Caco-2 (cell line): ENCODE measurements at regions of chr19 and their contacts with region 1.

Region 1: GRCh38 chr19:8389891-8390616 is at the start of gene RAB11B:
- DNase-seq: peak; percentile 99
- H3K4me3 ChIP-seq: peak within 1 kb of the TSS; percentile 86
- H3K4me3 Mint-ChIP-seq: peak within 1 kb of the TSS; percentile 81
- H3K27ac Mint-ChIP-seq: peak within 1 kb of the TSS; percentile 95
- H3K4me1 ChIP-seq: peaks cover 18% of the 10 kb centered on the region; the same call in 1 of the 2 replicates
- H3K4me1 Mint-ChIP-seq: peaks cover 8% of the 10 kb centered on the region
- H3K27me3 ChIP-seq: no peaks in the 10 kb centered on the region
- H3K27me3 Mint-ChIP-seq: no peaks in the 10 kb centered on the region
- CTCF ChIP-seq: no peak
- total RNA-seq, gene RAB11B: 86.3 and 91.3 TPM in 2 replicates

Region 2: GRCh38 chr19:8355631-8356402 is 34.2 kb before region 1 on chr19:
- CTCF ChIA-PET with region 1: interaction called, 21 read pairs
- POLR2A ChIA-PET with region 1: no interaction called
- intact Hi-C with region 1: no loop called
- DNase-seq: no peak
- H3K4me3 ChIP-seq: no peak overlapping the region
- H3K4me3 Mint-ChIP-seq: no peak overlapping the region
- H3K27ac Mint-ChIP-seq: no peak overlapping the region
- H3K4me1 ChIP-seq: peaks cover 13% of the 10 kb centered on the region; the same call in 1 of the 2 replicates
- H3K4me1 Mint-ChIP-seq: no peaks in the 10 kb centered on the region
- H3K27me3 ChIP-seq: no peaks in the 10 kb centered on the region
- H3K27me3 Mint-ChIP-seq: no peaks in the 10 kb centered on the region
- CTCF ChIP-seq: no peak

Region 3: GRCh38 chr19:8423817-8424223 is 33.8 kb after region 1 on chr19:
- CTCF ChIA-PET with region 1: interaction called, 7 read pairs
- POLR2A ChIA-PET with region 1: interaction called, 13 read pairs
- intact Hi-C with region 1: no loop called
- DNase-seq: peak; percentile 79 to 86
- H3K4me3 ChIP-seq: no peak overlapping the region
- H3K4me3 Mint-ChIP-seq: no peak overlapping the region
- H3K27ac Mint-ChIP-seq: peak overlapping the region; percentile 45
- H3K4me1 ChIP-seq: peaks cover 11% of the 10 kb centered on the region; the same call in 1 of the 2 replicates
- H3K4me1 Mint-ChIP-seq: no peaks in the 10 kb centered on the region
- H3K27me3 ChIP-seq: no peaks in the 10 kb centered on the region
- H3K27me3 Mint-ChIP-seq: no peaks in the 10 kb centered on the region
- CTCF ChIP-seq: no peak

Region 4: DNA sequence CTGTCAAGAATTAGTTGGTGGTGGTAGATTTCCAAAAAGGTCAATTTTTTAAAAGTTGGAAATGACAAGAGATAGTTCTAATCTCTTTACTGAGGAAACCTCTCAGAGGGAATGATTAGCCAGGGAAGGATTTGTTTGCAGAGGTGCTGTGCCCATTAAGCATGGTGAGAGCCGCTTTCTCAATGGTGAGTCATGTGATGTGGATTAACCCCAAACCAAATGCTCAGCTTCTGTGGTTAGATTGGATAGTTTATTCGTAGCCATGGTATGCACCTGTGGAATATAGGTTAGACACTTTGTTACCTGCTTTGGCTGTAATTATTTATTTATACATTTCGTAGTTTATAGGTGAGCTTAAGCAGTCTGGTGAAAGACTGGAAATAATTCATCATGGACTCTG is 61.8 kb after region 1 on chr19:
- CTCF ChIA-PET with region 1: no interaction called
- POLR2A ChIA-PET with region 1: no interaction called
- intact Hi-C with region 1: no loop called
- DNase-seq: no peak
- H3K4me3 ChIP-seq: no peak overlapping the region
- H3K4me3 Mint-ChIP-seq: no peak overlapping the region
- H3K27ac Mint-ChIP-seq: no peak overlapping the region
- H3K4me1 ChIP-seq: peaks cover 13% of the 10 kb centered on the region
- H3K4me1 Mint-ChIP-seq: peaks cover 14% of the 10 kb centered on the region
- H3K27me3 ChIP-seq: no peaks in the 10 kb centered on the region
- H3K27me3 Mint-ChIP-seq: no peaks in the 10 kb centered on the region
- CTCF ChIP-seq: no peak

Region 5: DNA sequence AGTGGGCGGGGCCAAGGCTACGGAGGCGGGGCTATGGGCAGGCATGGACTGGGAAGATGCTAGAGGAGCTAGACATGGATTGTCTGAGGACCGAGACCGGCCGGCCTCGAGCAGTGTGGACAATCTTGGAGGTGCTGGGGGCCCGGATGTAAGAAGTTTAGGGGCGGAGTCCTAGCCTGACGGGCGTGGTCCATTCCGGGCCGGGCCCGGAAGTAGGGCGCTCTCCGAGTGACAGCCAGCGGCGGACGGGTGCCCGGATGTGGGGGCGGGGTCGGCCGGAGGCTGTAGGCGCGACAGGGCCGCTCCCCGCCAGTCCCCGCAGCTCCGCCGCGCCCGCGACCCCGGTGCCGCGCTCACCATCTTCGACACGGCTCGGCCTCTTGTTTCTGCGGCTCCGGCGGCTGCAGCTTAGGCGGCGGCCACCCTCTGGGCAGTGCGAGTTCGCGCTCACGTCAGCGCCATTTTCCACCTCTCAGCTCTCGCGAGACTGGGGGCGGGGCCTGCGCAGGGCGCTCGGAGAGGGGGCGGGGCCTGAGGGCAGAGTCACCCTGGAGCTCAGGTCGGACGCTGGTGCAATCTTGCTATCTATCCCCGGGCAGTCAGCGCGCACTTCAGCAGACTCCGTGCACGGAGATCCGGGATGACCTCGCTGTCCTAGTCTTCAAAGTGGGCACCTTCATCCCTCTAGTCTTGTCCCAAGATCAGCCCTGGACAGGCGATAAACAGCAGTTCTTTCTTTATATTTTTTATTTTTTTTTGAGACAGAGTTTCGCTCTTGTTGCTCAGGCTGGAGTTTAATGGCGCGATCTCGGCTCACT is 123.8 kb after region 1 on chr19 and contains the start of gene ZNF414:
- CTCF ChIA-PET with region 1: interaction called, 3 read pairs
- POLR2A ChIA-PET with region 1: interaction called, 18 read pairs
- intact Hi-C with region 1: no loop called
- DNase-seq: peak; percentile 96 to 98
- H3K4me3 ChIP-seq: peak within 1 kb of the TSS; percentile 86
- H3K4me3 Mint-ChIP-seq: peak within 1 kb of the TSS; percentile 76
- H3K27ac Mint-ChIP-seq: peak within 1 kb of the TSS; percentile 91
- H3K4me1 ChIP-seq: peaks cover 12% of the 10 kb centered on the region; the same call in 1 of the 2 replicates
- H3K4me1 Mint-ChIP-seq: no peaks in the 10 kb centered on the region
- H3K27me3 ChIP-seq: no peaks in the 10 kb centered on the region
- H3K27me3 Mint-ChIP-seq: no peaks in the 10 kb centered on the region
- CTCF ChIP-seq: no peak
- total RNA-seq, gene ZNF414: 17.2 and 25.0 TPM in 2 replicates

Region 6: GRCh38 chr19:8526345-8527067 is 136.5 kb after region 1 on chr19:
- CTCF ChIA-PET with region 1: no interaction called
- POLR2A ChIA-PET with region 1: no interaction called
- intact Hi-C with region 1: loop called (anchors 1 kb)
- DNase-seq: peak; percentile 94
- H3K4me3 ChIP-seq: peak overlapping the region; percentile 86
- H3K4me3 Mint-ChIP-seq: no peak overlapping the region
- H3K27ac Mint-ChIP-seq: no peak overlapping the region
- H3K4me1 ChIP-seq: peaks cover 2% of the 10 kb centered on the region; the same call in 1 of the 2 replicates
- H3K4me1 Mint-ChIP-seq: peaks cover 7% of the 10 kb centered on the region
- H3K27me3 ChIP-seq: no peaks in the 10 kb centered on the region
- H3K27me3 Mint-ChIP-seq: no peaks in the 10 kb centered on the region
- CTCF ChIP-seq: no peak